Naive thymus-derived CD4-positive, alpha-beta T cell (primary cell): ENCODE measurements at regions of chr5 and their contacts with region 1.

Region 1: DNA sequence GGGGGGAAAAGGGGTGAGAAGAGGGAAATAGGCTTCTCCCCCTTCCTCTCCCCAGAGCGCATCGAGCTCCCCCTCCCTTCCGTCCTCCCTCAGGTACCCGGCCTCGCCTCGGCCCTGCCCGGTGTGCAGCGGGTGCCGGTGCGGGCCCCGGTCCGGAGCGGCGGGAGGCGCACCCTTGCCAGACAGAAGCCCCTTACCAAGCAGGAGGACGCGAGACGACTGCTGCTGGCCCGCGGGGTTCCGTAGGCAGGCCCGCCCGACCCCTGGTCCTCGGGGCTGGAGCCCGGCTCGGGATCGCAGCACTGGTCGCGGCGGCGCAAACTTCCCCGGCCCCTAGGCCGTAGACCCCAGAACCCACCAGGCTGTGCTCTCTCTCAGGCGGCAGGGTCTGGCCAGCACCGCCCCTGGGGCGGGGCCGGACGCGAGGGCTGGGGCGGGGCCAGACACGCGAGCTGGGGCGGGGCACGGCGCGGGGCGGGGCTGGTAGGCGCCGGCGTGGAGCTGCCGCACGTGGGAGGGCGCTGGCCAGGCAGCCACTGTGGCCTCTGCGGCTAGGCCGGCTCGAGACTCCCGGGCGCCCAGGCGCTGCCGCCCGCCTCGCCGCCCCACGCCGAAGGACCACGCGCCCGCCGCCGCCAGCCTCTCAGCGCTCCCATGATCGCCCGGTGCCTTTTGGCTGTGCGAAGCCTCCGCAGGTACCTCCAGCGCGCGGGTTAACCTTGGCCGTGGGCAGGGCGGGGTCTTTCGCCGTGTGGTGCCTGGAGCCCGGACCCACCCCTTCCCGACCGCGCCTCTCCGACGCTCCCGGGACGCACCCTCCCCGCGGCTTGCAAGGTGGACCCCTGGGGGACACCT is at the starts of genes NLN and SGTB:
- DNase-seq: peak; percentile 65 to 93 (median 83)
- ATAC-seq: peak; percentile 97
- H3K4me3 ChIP-seq: peak within 1 kb of the TSS; percentile 75
- H3K4me3 Mint-ChIP-seq: peak within 1 kb of the TSS in 6 of 10 donors; percentile 85 to 97 (median 92)
- H3K27ac ChIP-seq: peak within 1 kb of the TSS; percentile 97
- H3K27ac Mint-ChIP-seq: peak within 1 kb of the TSS; percentile 74 to 91 (median 86)
- H3K4me1 ChIP-seq: peaks cover 22 to 33% of the 10 kb centered on the region in 2 donors
- H3K4me1 Mint-ChIP-seq: peaks cover 9 to 36% (median 15%) of the 10 kb centered on the region in 7 donors
- H3K27me3 ChIP-seq: no peaks in the 10 kb centered on the region
- H3K27me3 Mint-ChIP-seq: no peaks in the 10 kb centered on the region
- total RNA-seq, gene NLN: 3.5 to 11.9 (median 4.1) TPM
- total RNA-seq, gene SGTB: 12.8 to 59.5 (median 50.8) TPM

Region 2: GRCh38 chr5:64768358-64769312 is 953.3 kb before region 1 on chr5 and contains the starts of genes CWC27 and SREK1IP1:
- CTCF ChIA-PET with region 1: no interaction called
- POLR2A ChIA-PET with region 1: no interaction called
- intact Hi-C with region 1: loop called in 1 of 2 experiments (anchors 5 kb)
- DNase-seq: peak; percentile 65 to 88 (median 83)
- ATAC-seq: peak; percentile 98
- H3K4me3 ChIP-seq: peak within 1 kb of the TSS; percentile 90
- H3K4me3 Mint-ChIP-seq: peak within 1 kb of the TSS; percentile 94 to 100 (median 99)
- H3K27ac ChIP-seq: peak within 1 kb of the TSS; percentile 88
- H3K27ac Mint-ChIP-seq: peak within 1 kb of the TSS; percentile 96 to 100 (median 98)
- H3K4me1 ChIP-seq: peaks cover 21 to 37% of the 10 kb centered on the region in 2 donors
- H3K4me1 Mint-ChIP-seq: peaks cover 34 to 80% (median 77%) of the 10 kb centered on the region in 7 donors
- H3K27me3 ChIP-seq: no peaks in the 10 kb centered on the region
- H3K27me3 Mint-ChIP-seq: no peaks in the 10 kb centered on the region
- total RNA-seq, gene CWC27: 17.8 to 27.4 (median 21.0) TPM
- total RNA-seq, gene SREK1IP1: 11.7 to 29.9 (median 21.7) TPM

Region 3: DNA sequence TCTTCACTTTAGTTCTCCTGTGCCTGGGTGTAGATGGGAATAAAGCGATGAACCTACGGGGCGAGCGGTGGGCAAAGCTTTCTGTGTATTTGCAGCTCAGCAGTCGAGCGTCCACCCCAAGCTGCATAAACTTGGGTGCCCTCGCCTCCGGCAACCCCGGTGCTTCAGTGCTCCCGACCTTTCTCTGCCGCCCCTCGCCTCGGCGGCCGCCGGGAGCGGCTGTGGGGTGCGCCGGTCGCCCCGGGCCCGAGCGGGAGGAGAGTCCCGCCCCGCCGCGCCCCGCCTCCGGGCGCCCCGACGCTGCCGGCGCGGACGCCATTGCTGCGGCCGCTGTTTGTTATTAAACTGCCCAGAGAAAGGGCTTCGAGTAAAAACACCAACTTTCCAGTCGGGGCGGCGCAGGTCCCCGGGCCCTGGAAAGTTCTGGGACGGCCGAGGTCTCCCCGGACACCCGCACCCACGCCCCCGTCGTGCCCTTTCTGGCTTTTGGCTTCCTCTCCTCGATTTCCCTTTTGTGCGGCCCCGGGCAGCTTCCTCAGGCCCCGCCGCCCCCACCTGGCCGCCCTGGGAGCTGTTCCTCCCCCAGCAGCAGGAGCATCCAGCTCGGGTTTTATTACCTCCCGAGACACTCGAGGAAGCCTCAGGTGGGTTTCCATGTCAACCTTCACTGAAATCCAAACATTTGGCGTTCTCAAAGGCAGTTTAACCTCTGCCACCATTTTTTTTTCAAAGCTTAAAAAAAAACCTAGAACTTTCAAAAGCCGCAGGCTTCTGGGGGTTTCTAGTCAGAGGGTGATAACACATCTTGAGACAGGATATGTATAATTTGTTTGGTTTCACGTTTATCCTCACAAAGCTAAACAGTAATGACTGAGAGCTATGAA is 618.9 kb before region 1 on chr5:
- CTCF ChIA-PET with region 1: no interaction called
- POLR2A ChIA-PET with region 1: no interaction called
- intact Hi-C with region 1: loop called in 1 of 2 experiments (anchors 5 kb)
- DNase-seq: peak; percentile 44 to 67 (median 57)
- ATAC-seq: peak; percentile 78
- H3K4me3 ChIP-seq: peak overlapping the region; percentile 63
- H3K4me3 Mint-ChIP-seq: peak overlapping the region; percentile 82 to 93 (median 87)
- H3K27ac ChIP-seq: peak overlapping the region; percentile 82
- H3K27ac Mint-ChIP-seq: peak overlapping the region; percentile 83 to 96 (median 92)
- H3K4me1 ChIP-seq: peaks cover 12% of the 10 kb centered on the region in 2 donors
- H3K4me1 Mint-ChIP-seq: peaks cover 32 to 52% (median 41%) of the 10 kb centered on the region in 7 donors
- H3K27me3 ChIP-seq: no peaks in the 10 kb centered on the region
- H3K27me3 Mint-ChIP-seq: peaks cover 0 to 22% (median 0%) of the 10 kb centered on the region in 5 donors

Region 4: DNA sequence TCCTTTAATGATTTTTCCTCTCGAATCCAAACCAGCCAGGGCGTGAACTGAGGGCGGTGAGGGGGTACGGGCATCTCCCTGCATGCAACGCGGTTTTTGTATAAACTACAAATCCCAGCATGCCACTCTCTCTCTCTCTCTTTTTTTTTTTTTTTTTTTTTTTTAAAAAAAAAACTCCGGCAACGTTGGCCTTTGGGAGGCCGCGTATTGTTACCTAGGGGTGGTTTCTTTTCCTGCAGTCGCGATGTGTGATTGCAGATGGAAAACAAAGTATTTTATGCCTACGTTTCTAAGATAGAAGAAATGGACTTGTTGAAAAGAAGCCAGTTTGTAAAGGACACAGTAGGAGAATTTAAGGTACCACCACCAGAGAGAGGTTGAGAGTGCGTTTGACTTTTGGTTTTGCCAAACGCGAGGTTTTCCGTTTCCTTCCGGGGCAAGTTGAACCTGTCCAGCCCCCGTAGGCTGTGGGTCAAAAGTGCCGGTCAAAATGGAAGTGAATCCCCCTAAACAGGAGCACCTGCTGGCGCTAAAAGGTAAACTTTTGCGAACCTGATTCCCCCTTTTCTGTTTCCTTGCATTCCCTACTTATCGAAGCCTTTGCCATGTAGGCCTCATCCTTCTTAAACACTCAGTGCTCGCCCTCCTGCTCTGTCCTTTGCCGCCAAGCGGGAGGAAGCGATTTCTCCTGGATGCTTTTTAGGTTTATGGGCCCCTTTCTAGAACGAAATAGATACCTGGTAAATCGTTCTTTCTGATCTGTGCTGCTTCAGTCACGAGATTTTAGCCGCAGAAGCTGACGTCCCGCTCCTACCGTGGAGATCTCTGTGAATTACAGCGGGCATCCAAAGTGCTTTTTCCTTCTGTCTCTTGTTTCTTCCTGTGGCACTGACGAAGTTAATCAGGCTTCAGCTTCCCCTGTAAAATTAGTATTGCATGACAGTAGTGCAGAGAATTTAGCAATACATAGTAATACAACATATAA is 97.1 kb before region 1 on chr5 and contains the starts of genes SHLD3 and TRAPPC13:
- CTCF ChIA-PET with region 1: interaction called, 4 read pairs
- POLR2A ChIA-PET with region 1: interaction called, 8 read pairs
- intact Hi-C with region 1: loop called (anchors 1 kb)
- DNase-seq: peak; percentile 57 to 92 (median 91)
- ATAC-seq: peak; percentile 86
- H3K4me3 ChIP-seq: peak within 1 kb of the TSS; percentile 75
- H3K4me3 Mint-ChIP-seq: peak within 1 kb of the TSS; percentile 93 to 100 (median 98)
- H3K27ac ChIP-seq: peak within 1 kb of the TSS; percentile 92
- H3K27ac Mint-ChIP-seq: peak within 1 kb of the TSS; percentile 97 to 100 (median 98)
- H3K4me1 ChIP-seq: peaks cover 20% of the 10 kb centered on the region in 2 donors
- H3K4me1 Mint-ChIP-seq: peaks cover 14 to 73% (median 51%) of the 10 kb centered on the region in 7 donors
- H3K27me3 ChIP-seq: no peaks in the 10 kb centered on the region
- H3K27me3 Mint-ChIP-seq: peaks cover 0 to 3% (median 0%) of the 10 kb centered on the region in 5 donors
- total RNA-seq, gene SHLD3: 4.8 to 11.3 (median 5.8) TPM
- total RNA-seq, gene TRAPPC13: 18.2 to 23.1 (median 20.8) TPM

Region 5: GRCh38 chr5:65708145-65708544 is 13.8 kb before region 1 on chr5:
- CTCF ChIA-PET with region 1: interaction called, 3 read pairs
- POLR2A ChIA-PET with region 1: interaction called, 7 read pairs
- intact Hi-C with region 1: loop called in 1 of 2 experiments (anchors 1 kb)
- DNase-seq: no peak
- ATAC-seq: no peak
- H3K4me3 ChIP-seq: no peak overlapping the region
- H3K4me3 Mint-ChIP-seq: no peak overlapping the region
- H3K27ac ChIP-seq: no peak overlapping the region
- H3K27ac Mint-ChIP-seq: peak overlapping the region in 1 of 9 donors; percentile 26
- H3K4me1 ChIP-seq: peaks cover 0 to 5% of the 10 kb centered on the region in 2 donors
- H3K4me1 Mint-ChIP-seq: peaks cover 0 to 36% (median 19%) of the 10 kb centered on the region in 7 donors
- H3K27me3 ChIP-seq: no peaks in the 10 kb centered on the region
- H3K27me3 Mint-ChIP-seq: no peaks in the 10 kb centered on the region

Region 6: GRCh38 chr5:65774346-65774745 is 52.4 kb after region 1 on chr5:
- CTCF ChIA-PET with region 1: no interaction called
- POLR2A ChIA-PET with region 1: no interaction called
- intact Hi-C with region 1: no loop called
- DNase-seq: no peak
- ATAC-seq: no peak
- H3K4me3 ChIP-seq: no peak overlapping the region
- H3K4me3 Mint-ChIP-seq: no peak overlapping the region
- H3K27ac ChIP-seq: no peak overlapping the region
- H3K27ac Mint-ChIP-seq: no peak overlapping the region
- H3K4me1 ChIP-seq: peaks cover 0 to 3% of the 10 kb centered on the region in 2 donors
- H3K4me1 Mint-ChIP-seq: peaks cover 6 to 25% (median 12%) of the 10 kb centered on the region in 7 donors
- H3K27me3 ChIP-seq: no peaks in the 10 kb centered on the region
- H3K27me3 Mint-ChIP-seq: no peaks in the 10 kb centered on the region

Region 7: DNA sequence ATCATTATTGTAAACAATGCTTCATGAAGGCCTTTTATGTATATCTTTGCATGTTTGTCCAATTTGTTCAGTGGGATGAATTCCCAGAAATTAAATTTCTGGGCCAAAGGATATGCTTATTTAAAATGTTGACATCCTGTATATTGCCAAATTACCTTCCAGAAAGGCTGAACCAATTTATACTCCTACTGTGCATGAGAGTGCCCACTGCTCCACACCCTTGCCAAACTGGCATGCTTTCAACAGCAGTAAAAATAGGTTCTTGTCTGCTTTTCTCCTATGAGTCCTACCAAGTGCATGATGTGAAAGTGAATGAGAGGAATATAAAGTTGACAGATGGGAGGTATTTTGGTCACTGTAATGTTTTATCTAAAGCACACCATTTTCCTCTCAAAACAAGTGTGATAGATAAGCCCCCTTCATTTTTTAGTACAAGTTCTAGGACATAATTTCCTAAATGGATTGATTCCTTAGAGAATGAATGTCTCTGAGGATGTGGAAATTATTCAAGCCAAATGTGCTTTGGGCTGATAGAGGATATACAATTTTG is 133.9 kb after region 1 on chr5:
- CTCF ChIA-PET with region 1: no interaction called
- POLR2A ChIA-PET with region 1: no interaction called
- intact Hi-C with region 1: no loop called
- DNase-seq: no peak
- ATAC-seq: no peak
- H3K4me3 ChIP-seq: no peak overlapping the region
- H3K4me3 Mint-ChIP-seq: no peak overlapping the region
- H3K27ac ChIP-seq: no peak overlapping the region
- H3K27ac Mint-ChIP-seq: no peak overlapping the region
- H3K4me1 ChIP-seq: no peaks in the 10 kb centered on the region
- H3K4me1 Mint-ChIP-seq: peaks cover 0 to 12% (median 4%) of the 10 kb centered on the region in 7 donors
- H3K27me3 ChIP-seq: no peaks in the 10 kb centered on the region
- H3K27me3 Mint-ChIP-seq: peaks cover 0 to 5% (median 0%) of the 10 kb centered on the region in 5 donors

Region 8: DNA sequence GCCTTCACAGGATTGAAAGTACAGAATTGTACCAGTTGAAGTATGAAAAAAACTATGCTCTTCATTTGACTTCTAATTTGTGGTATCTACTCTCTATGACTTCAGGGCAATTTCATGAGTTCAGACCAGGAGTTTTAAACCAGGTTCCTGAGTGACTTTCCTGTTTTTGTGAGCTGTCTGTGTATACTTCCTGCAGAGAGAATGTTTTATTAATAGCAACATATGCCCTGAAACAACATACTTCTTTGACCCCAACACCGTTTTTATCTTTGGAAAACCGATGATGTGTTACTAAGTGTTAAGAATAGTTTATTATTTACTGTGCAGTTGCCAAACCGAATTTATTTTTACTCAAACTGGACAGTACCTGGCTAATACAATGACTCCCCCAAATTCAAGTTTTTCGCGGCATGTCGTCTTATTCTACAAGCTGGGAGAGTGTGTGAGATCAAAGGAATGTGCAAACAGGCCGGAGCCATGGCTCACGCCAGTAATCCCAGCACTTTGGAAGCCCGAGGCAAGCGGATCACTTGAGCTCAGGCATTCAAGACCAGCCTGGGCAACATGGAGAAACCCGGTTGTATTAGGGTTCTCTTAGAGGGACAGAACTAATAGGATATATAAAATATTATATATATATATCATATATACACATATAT is 145.7 kb after region 1 on chr5:
- CTCF ChIA-PET with region 1: no interaction called
- POLR2A ChIA-PET with region 1: interaction called, 3 read pairs
- intact Hi-C with region 1: loop called in 1 of 2 experiments (anchors 2 kb)
- DNase-seq: peak in 6 of 9 donors; percentile 5 to 27 (median 12)
- ATAC-seq: no peak
- H3K4me3 ChIP-seq: peak overlapping the region; percentile 27
- H3K4me3 Mint-ChIP-seq: peak overlapping the region; percentile 61 to 84 (median 78)
- H3K27ac ChIP-seq: peak overlapping the region; percentile 69
- H3K27ac Mint-ChIP-seq: peak overlapping the region in 8 of 9 donors; percentile 82 to 99 (median 93)
- H3K4me1 ChIP-seq: peaks cover 0 to 16% of the 10 kb centered on the region in 2 donors
- H3K4me1 Mint-ChIP-seq: peaks cover 16 to 49% (median 30%) of the 10 kb centered on the region in 7 donors
- H3K27me3 ChIP-seq: no peaks in the 10 kb centered on the region
- H3K27me3 Mint-ChIP-seq: no peaks in the 10 kb centered on the region